Activated naive CD4-positive, alpha-beta T cell treated with anti-CD3 and anti-CD28 coated beads, Interleukin-2, amount 10 ng/mL, durations not matched to agents 7 days and 5 days (primary cell): ENCODE measurements at regions of chr20 and their contacts with region 1.

Region 1: DNA sequence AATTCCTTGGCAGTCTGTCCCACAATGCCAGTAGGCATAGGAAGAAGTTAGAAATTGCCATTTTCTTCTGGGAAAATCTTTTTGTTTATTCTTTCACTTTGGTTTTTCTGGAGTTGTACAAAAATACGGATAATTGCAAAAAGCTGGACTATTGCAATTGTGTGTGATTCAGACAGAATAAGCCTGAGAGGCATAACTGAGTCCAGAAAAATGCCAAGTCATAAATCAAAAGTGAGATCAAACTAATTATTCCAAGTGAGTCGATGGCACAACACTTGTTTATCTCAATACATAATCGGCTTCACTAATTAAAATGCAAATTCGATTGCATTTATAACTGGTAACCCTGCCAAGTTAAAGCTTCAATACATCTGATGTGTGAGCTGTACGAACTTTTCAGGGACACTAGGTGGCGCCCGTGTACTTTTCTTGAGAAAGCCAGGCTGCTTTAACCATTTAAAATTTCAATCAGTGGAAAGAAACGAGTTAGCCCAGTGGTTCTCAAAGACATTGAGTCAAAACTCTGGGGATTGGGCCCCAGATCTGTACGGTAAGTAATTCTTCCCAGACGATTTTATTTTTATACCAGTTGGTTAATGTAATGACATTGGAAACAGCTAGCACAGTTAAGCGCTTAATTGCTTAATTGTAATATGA is 102.6 kb downstream of the LAMP5 start:
- DNase-seq: peak; percentile 66
- H3K4me3 Mint-ChIP-seq: no peak overlapping the region
- H3K27ac Mint-ChIP-seq: no peak overlapping the region
- H3K4me1 Mint-ChIP-seq: no peaks in the 10 kb centered on the region
- H3K27me3 Mint-ChIP-seq: no peaks in the 10 kb centered on the region

Region 2: GRCh38 chr20:9867196-9867980 is 250.4 kb after region 1 on chr20:
- CTCF ChIA-PET with region 1: no interaction called
- DNase-seq: no peak
- H3K4me3 Mint-ChIP-seq: no peak overlapping the region
- H3K27ac Mint-ChIP-seq: no peak overlapping the region
- H3K4me1 Mint-ChIP-seq: no peaks in the 10 kb centered on the region
- H3K27me3 Mint-ChIP-seq: no peaks in the 10 kb centered on the region

Region 3: DNA sequence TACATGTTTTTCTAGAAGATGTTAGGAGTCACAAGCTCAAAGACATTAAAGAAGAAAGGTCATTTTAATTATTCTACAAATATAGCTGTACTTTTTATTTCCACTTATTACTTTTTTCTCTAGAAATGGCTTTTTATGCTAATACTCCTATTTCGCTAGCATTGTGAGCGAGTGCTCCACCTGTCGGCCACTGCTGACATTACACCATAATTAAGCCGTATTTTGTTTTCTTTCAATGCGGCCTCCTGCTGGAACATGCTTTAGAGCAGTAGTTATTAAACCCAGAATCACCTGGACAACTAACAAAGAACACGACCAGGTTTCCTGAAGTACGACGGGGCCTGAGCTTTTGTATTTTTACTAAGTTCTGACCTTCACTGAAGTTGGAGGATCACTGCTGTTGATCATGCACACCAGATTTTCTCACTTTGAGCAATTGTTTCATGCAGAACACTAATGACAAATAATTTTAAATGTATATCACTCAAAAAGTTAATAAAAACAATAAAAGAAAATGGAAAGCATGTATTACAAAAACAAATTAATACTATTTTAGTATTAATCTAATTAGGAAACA is 296.0 kb after region 1 on chr20:
- CTCF ChIA-PET with region 1: interaction called, 14 read pairs
- DNase-seq: peak; percentile 33
- H3K4me3 Mint-ChIP-seq: no peak overlapping the region
- H3K27ac Mint-ChIP-seq: no peak overlapping the region
- H3K4me1 Mint-ChIP-seq: no peaks in the 10 kb centered on the region
- H3K27me3 Mint-ChIP-seq: peaks cover 4% of the 10 kb centered on the region